HEK293T (cell line): ENCODE measurements at regions of chr5 and their contacts with region 1.

Region 1: GRCh38 chr5:132820162-132820754 is 7.2 kb downstream of the SOWAHA start:
- DNase-seq: peak; percentile 86

Region 2: DNA sequence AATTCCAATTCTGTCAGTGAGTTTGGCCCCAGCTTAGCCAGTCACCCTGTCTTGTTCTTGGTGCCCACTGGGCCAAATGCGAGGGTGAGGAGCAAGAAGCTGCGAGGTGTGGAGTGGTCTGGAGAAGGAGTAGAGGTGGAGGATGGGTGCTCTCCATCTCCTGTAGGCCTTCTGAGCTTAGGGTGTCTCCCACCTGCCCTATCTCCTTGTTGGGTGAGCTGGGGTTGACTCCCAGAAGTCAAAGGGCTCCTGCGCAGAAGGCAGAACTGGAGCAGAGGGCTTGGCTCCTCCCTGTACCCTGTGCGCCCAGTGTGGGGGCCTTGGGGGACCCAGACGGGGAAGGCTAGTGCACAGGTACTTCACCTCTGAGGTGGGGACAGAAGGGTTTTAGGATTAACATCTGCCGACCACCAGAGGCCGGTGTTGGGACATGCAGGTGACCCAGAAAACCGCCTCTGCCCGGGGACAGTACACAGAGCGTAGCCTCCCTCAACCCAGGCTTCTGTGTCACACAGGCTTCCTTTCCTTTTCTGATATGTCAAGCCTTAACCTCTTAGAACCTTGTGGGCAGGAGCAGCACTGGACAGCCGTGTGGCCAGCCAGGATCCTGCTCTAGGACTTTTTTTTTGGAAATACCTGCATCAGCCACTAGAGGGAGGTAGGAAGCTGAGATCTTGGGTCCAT is 293.8 kb before region 1 on chr5:
- CTCF ChIA-PET with region 1: interaction called, 18 read pairs
- POLR2A ChIA-PET with region 1: no interaction called
- DNase-seq: peak; percentile 69

Region 3: DNA sequence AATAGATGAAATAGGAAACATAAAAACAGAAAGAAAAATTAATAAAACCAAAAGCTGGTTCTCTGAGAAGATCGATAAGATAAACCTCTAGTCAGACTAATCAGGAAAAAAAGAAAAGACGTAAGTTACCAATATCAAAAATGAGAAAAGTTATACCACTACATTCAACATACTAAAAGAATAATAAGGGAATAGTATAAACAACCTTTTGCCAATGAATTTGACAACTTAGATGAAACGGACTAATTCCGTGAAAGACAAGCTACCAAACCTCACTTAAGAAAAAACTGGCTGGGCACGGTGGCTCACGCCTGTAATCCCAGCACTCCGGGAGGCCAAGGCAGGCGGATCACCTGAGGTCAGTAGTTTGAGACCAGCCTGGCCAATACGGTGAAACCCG is 90.4 kb before region 1 on chr5:
- CTCF ChIA-PET with region 1: no interaction called
- POLR2A ChIA-PET with region 1: no interaction called
- DNase-seq: no peak

Region 4: DNA sequence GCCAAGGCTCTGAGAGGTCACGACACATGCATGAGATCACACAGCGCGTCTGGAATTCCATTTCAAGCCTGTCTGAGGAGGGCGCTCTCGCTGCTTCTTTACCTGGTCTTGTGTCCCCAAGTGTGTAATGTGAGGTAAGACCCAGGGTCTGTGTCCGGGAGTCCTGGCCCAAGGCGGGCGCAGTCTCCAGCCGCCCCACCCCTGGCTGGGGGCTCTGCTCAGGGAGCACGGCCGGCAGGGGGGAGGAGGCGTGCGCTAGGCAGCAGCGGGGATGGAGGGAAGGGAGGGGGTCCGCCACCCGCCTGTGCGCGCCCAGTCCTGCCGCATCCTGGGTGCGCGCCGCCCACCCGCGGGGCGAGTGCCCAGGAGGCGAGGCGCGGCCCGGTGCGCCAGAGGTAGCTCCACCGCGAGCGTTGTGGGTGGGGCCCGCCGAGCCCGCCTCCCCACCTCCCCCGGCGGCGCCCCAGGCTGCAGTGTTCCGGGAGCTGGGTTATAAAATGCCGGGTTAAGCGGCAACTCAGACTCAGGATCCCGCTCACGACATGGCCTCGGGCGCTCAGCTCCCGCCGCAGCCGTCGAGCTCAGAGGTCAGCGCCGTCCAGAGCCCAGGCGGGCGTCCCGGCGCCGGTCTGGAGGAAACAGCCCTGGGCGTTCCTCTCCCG is 73.2 kb before region 1 on chr5 and contains the start of gene CCNI2:
- CTCF ChIA-PET with region 1: interaction called, 10 read pairs
- POLR2A ChIA-PET with region 1: no interaction called
- DNase-seq: peak; percentile 49

Region 5: GRCh38 chr5:132753135-132753987 is 66.9 kb before region 1 on chr5:
- CTCF ChIA-PET with region 1: interaction called, 40 read pairs
- POLR2A ChIA-PET with region 1: interaction called, 7 read pairs
- DNase-seq: peak; percentile 30

Region 6: DNA sequence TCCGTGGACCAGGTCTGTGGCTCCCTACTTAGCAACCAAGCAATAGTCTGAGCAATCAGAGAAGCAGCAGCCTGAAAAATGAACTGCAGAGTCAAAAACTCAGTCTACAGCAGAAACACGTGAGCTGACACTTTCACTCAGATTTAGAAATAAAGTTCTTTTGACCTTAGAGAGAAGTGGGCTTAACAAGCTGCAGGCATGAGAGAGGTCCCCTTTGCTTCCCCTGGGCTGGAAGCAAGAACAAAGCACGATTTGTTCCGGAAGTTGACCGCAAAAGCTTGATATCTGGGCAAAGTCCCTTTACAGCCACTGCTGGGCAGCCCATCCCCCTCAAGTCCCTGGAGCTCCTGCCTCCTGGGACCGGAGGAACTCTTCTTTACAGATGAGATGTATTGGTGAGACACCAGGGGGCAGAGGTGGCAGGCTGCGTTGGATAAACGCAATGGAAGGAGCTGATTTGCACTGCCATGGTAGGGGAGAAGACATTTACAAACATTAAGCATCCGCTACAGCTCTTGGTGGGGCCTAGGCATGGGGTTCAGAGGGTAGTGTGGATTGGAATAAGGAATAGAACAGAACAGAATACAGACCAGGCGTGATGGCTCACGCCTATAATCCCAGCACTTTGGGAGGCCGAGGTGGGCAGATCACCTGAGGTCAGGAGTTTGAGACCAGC is 13.0 kb before region 1 on chr5:
- CTCF ChIA-PET with region 1: interaction called, 25 read pairs
- POLR2A ChIA-PET with region 1: interaction called, 3 read pairs
- DNase-seq: peak; percentile 39

Region 7: DNA sequence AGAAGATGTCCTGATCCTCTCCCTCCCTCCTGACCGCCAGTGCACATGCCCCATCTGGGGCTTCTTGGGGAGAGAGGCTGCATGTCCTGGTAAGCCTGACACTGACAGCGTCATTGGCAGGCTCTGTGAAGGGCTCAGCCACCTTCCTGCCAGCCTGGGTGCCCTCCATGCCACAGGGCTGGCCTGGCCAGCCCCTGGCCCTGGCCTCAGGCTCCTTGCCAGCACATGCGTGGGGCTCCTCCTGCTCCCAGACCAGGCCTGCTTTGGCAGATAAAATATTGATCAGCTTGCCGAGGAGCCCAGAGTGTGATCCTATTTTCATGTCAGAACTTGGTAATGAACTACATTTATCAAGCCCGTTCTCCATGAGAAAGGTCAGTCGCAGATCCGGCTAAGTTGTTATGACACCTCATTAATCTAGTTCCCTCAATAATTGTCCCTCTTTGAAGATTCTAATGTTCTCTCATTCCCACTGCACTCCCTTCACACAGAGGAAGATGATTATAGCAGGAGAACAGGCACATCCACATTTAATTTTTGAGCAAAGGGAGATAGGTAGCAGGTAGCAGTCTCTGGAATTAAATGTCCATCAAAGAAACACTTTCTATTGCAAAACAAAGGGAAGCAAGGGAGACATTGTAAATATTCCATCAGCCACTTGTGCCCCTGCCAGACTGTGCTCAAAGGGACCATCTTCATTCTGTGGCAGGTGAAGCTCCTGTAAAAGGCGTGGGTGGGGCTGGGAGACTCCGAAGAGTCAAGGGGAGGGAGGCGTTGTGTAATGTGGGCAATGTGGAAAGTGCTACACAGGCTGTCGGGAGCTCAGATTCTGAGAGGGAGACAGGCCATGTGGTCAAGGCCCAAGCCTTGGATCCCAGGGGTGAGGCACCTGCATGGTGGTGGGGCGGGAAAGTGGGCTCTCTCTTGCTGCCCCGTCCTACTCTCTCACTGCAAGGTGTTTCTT is 503.5 kb after region 1 on chr5:
- CTCF ChIA-PET with region 1: no interaction called
- POLR2A ChIA-PET with region 1: no interaction called
- DNase-seq: no peak